ENCODE measurements at regions of chr17 and their contacts with region 1.

Region 1: GRCh38 chr17:4366327-4367063 is at the start of gene UBE2G1:
- DNase-seq: peak; percentile 97
- H3K4me3 ChIP-seq: peak within 1 kb of the TSS; percentile 82 to 87 (median 84)
- H3K27ac ChIP-seq: peak within 1 kb of the TSS; percentile 70
- H3K4me1 ChIP-seq: peaks cover 4% of the 10 kb centered on the region
- H3K27me3 ChIP-seq: no peaks in the 10 kb centered on the region
- CTCF ChIP-seq: peak; percentile 25 to 33
- total RNA-seq, gene UBE2G1: 60.8 to 93.0 TPM

Region 2: GRCh38 chr17:4304417-4305027 is 62.0 kb before region 1 on chr17:
- CTCF ChIA-PET with region 1: no interaction called
- dilution Hi-C with region 1: no loop called
- in situ Hi-C with region 1: no loop called
- intact Hi-C with region 1: loop called (anchors 1 kb)
- DNase-seq: peak; percentile 35
- H3K4me3 ChIP-seq: no peak overlapping the region
- H3K27ac ChIP-seq: no peak overlapping the region
- H3K4me1 ChIP-seq: no peaks in the 10 kb centered on the region
- H3K27me3 ChIP-seq: no peaks in the 10 kb centered on the region
- CTCF ChIP-seq: peak; percentile 69 to 73

Region 3: GRCh38 chr17:4318186-4318585 is 48.3 kb before region 1 on chr17:
- CTCF ChIA-PET with region 1: no interaction called
- dilution Hi-C with region 1: no loop called
- in situ Hi-C with region 1: no loop called
- intact Hi-C with region 1: loop called (anchors 5 kb)
- DNase-seq: peak; percentile 47
- H3K4me3 ChIP-seq: peak overlapping the region in 1 of 3 experiments; percentile 1
- H3K27ac ChIP-seq: peak overlapping the region; percentile 69
- H3K4me1 ChIP-seq: peaks cover 26% of the 10 kb centered on the region
- H3K27me3 ChIP-seq: no peaks in the 10 kb centered on the region
- CTCF ChIP-seq: peak in 1 of 2 donors; percentile 35

Region 4: DNA sequence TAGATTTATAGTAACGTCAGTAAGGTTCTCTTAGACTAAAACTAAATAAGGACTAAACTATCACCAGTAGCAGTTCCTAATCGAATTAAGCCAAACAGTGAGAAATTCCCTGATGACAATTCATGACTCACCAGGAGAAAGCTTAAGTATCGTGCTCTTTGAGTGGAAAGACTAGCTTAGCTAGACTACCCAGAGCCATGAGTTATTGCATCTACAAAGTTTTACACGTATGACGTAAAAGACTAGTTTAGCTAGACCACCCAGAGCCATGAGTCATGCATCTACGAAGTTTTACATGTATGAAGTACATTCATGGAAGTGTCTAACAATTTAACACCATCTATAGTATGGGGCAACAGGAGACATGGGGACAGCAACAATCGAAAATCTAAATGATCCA is 36.7 kb before region 1 on chr17:
- CTCF ChIA-PET with region 1: no interaction called
- dilution Hi-C with region 1: no loop called
- in situ Hi-C with region 1: no loop called
- intact Hi-C with region 1: loop called (anchors 2 kb)
- DNase-seq: peak; percentile 96
- H3K4me3 ChIP-seq: no peak overlapping the region
- H3K27ac ChIP-seq: peak overlapping the region; percentile 95
- H3K4me1 ChIP-seq: peaks cover 45% of the 10 kb centered on the region
- H3K27me3 ChIP-seq: no peaks in the 10 kb centered on the region
- CTCF ChIP-seq: no peak

Region 5: DNA sequence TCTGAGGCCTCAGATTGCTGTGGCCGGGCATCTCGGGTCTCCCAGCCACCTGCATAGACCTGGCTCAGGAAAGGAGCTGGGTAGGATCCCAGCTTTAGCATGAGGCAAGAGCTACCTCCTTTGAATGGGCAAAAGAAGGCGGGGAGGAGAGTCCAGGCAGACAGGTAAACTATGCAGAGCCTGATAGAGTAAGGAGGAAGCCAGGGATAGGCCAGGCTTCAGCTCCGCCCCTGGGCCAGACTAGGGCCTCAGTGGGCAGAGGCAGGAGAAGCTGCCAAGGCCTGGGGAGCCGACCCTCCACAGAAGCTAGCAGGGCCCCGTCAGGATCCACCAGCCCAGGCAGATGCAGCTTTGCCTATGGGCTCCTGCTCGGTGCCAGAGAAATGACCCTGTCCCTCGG is 22.6 kb after region 1 on chr17:
- CTCF ChIA-PET with region 1: no interaction called
- dilution Hi-C with region 1: no loop called
- in situ Hi-C with region 1: no loop called
- intact Hi-C with region 1: loop called (anchors 2 kb)
- DNase-seq: peak; percentile 23
- H3K4me3 ChIP-seq: no peak overlapping the region
- H3K27ac ChIP-seq: no peak overlapping the region
- H3K4me1 ChIP-seq: peaks cover 27% of the 10 kb centered on the region
- H3K27me3 ChIP-seq: no peaks in the 10 kb centered on the region
- CTCF ChIP-seq: no peak

Measured in mammary epithelial cell (primary cell).